PC-3 (cell line): ENCODE measurements at regions of chr1 and their contacts with region 1.

Region 1: GRCh38 chr1:93324486-93325464 is 20.9 kb upstream of the DR1 start:
- DNase-seq: peak; percentile 94
- ATAC-seq: peak; percentile 90
- H3K4me3 ChIP-seq: peak overlapping the region; percentile 54
- H3K27ac ChIP-seq: peak overlapping the region; percentile 87
- H3K4me1 ChIP-seq: peaks cover 58% of the 10 kb centered on the region
- H3K27me3 ChIP-seq: no peaks in the 10 kb centered on the region
- CTCF ChIP-seq: no peak

Region 2: DNA sequence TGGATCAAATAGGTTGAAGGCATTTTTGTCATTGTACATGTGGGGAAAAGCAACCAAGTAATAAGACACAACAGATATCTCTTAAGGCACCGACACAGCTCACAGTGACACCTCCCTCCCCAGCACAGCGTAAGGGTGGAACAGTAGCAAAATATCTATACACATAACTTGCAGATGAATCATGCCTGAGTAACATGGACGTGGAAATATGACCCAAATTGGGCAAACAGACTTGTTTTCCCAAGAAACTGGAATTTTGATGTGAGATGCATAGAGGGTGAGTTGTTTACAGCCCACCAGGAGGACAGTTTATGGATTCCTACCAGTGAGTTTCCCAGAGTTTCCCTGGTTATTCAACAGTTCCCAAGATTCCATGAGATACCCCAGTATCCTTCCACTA is 13.6 kb after region 1 on chr1:
- CTCF ChIA-PET with region 1: interaction called, 5 read pairs
- POLR2A ChIA-PET with region 1: interaction called, 5 read pairs
- intact Hi-C with region 1: loop called (anchors 1 kb)
- DNase-seq: peak; percentile 96
- ATAC-seq: peak; percentile 95
- H3K4me3 ChIP-seq: peak overlapping the region; percentile 41; the same call in 1 of the 2 replicates
- H3K27ac ChIP-seq: peak overlapping the region; percentile 91
- H3K4me1 ChIP-seq: peaks cover 43% of the 10 kb centered on the region
- H3K27me3 ChIP-seq: no peaks in the 10 kb centered on the region
- CTCF ChIP-seq: no peak

Region 3: GRCh38 chr1:93345633-93346420 is 21.1 kb after region 1 on chr1 and contains the start of gene DR1:
- CTCF ChIA-PET with region 1: interaction called, 5 read pairs
- POLR2A ChIA-PET with region 1: interaction called, 21 read pairs
- intact Hi-C with region 1: loop called (anchors 1 kb)
- DNase-seq: peak; percentile 94
- ATAC-seq: peak; percentile 87
- H3K4me3 ChIP-seq: peak within 1 kb of the TSS; percentile 97
- H3K27ac ChIP-seq: peak within 1 kb of the TSS; percentile 91
- H3K4me1 ChIP-seq: peaks cover 12% of the 10 kb centered on the region; the same call in 1 of the 2 replicates
- H3K27me3 ChIP-seq: no peaks in the 10 kb centered on the region
- CTCF ChIP-seq: no peak
- total RNA-seq, gene DR1: 34.8 and 48.6 TPM in 2 replicates

Region 4: DNA sequence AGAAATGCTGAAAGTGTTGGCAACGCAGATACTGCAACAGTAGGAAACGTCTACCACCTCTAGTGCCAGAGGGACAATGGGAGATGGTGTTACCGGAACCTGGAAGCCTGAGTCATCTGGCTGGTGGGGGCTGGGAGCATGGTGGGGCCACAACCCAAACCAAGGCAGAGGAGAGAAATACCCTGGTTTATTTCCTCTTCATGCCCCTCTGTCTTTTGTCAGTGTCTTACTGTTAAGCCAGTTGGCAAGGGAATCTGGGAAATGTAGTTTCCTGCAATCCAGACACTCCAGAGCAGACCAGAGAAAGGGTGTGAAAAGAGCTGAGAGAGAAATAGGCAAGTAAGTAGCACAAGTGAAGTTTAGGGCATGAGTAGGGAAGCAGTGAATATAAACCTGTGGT is 539.4 kb after region 1 on chr1:
- CTCF ChIA-PET with region 1: no interaction called
- POLR2A ChIA-PET with region 1: no interaction called
- intact Hi-C with region 1: no loop called
- DNase-seq: no peak
- ATAC-seq: no peak
- H3K4me3 ChIP-seq: no peak overlapping the region
- H3K27ac ChIP-seq: no peak overlapping the region
- H3K4me1 ChIP-seq: no peaks in the 10 kb centered on the region
- H3K27me3 ChIP-seq: no peaks in the 10 kb centered on the region
- CTCF ChIP-seq: no peak